Ascending aorta (tissue), 2 donors: ENCODE measurements at regions of chr3 and their contacts with region 1.

Region 1: GRCh38 chr3:190064112-190064511 is 56.6 kb downstream of the P3H2 start:
- DNase-seq: no peak
- H3K4me3 ChIP-seq: no peak overlapping the region
- H3K27ac ChIP-seq: no peak overlapping the region
- H3K4me1 ChIP-seq: no peaks in the 10 kb centered on the region
- H3K27me3 ChIP-seq: no peaks in the 10 kb centered on the region
- CTCF ChIP-seq: no peak

Region 2: DNA sequence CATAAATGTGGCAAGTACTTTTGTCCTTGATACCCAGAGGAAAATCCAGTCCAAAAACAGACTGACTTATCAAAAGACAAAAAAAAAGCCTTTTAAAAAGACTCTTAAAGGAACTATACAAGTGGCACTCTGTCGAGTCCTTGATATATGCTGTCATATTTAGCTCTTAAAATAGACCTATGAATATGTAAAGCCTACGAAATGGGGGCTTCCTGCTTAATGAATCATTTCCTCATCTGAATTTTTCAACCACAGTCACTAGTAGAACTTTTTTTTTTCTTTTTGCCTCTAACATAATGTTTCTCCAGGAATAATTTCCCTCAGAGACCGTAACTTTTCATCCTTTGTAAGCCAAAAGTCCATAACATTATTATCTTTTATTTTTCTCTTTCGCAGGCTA is 39.2 kb before region 1 on chr3:
- intact Hi-C with region 1: loop called (anchors 5 kb)
- DNase-seq: no peak
- H3K4me3 ChIP-seq: no peak overlapping the region
- H3K27ac ChIP-seq: no peak overlapping the region
- H3K4me1 ChIP-seq: no peaks in the 10 kb centered on the region
- H3K27me3 ChIP-seq: no peaks in the 10 kb centered on the region
- CTCF ChIP-seq: no peak

Region 3: DNA sequence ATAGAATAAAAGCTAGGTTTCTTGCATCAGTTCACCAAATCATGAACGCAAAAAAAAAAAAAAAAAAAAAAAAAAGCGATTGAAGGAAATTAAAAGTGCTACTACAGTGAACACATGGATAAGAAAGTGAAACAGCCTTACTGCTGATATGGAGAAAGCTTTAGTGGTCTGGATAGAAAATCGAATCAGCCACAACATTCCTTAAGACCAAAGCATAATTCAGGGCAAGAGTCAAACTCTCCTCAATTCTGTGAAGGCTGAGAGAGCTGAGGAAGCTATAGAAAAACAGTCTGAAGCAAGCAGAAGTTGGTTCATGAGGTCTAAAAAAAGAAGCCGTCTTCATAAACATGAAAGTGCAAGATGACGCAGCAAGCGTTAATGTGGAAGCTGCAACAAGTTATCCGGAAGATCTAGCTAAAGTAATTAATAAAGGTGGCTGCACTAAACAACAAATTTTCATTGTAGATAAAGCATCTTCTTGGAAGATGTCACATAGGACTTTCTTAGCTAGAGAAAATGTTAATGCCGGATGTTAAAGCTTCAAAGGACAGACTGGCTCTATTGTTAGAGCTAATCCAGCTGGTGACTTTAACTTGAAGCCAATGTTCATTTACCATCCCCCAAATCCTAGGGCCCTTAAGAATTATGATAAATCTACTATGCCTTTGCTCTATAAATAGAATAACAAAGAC is 37.4 kb after region 1 on chr3:
- intact Hi-C with region 1: no loop called
- DNase-seq: no peak
- H3K4me3 ChIP-seq: peak overlapping the region; percentile 17 to 33
- H3K27ac ChIP-seq: peak overlapping the region; percentile 59 to 61
- H3K4me1 ChIP-seq: no peaks in the 10 kb centered on the region
- H3K27me3 ChIP-seq: no peaks in the 10 kb centered on the region
- CTCF ChIP-seq: no peak